IMR-90 (cell line): ENCODE measurements at regions of chr2 and their contacts with region 1.

Region 1: DNA sequence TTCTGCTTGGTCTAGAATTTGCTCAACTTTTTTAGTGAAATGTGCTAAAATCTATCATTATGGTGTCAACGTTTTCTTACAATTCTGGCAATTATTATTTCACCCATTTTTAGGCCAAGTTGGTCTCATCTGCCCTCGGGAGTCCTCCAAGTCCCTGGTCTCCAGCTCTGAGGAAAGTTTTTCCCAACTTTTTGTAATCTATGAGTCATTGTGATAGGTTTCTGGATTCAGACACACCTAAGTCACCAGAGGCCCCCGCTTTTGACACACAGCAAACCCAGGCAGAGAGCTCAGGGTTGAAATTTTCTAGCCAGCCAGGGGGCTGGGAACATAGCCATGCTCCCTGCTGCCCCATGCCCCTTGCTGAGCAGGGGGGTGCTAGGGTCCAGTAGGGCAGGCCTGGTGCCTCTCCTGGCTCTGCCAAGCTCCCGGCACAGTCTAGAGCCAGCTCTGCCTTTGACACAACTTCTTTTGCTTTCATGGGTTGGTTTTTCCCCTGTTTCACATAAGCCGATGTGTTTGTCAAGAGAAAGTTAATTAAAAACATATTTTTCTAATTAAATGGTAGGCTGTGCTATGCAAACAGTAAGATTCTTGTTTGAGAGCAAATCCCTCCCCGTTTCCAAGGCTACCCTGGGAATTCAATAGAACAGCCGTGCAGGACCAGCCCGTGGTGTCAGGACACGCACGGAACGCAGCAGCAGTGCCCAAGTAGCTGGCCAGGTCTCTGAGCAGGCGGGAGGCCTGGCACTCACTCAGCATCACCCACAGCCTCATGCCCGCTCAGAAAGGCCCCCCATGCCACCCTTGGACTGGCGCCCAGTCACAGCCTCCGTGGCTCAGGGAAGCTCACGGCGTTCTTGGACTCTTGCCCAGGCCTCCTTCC is 25.5 kb upstream of the SNED1 start:
- DNase-seq: no peak
- ATAC-seq: no peak
- H3K4me3 ChIP-seq: no peak overlapping the region
- H3K27ac ChIP-seq: no peak overlapping the region
- H3K4me1 ChIP-seq: peaks cover 2% of the 10 kb centered on the region; the same call in 1 of the 2 replicates
- H3K27me3 ChIP-seq: peaks cover 21% of the 10 kb centered on the region
- CTCF ChIP-seq: no peak
- POLR2A ChIP-seq: no peak
- RAD21 ChIP-seq: no peak

Region 2: GRCh38 chr2:241025639-241026038 is 52.8 kb after region 1 on chr2:
- CTCF ChIA-PET with region 1: no interaction called
- POLR2A ChIA-PET with region 1: no interaction called
- dilution Hi-C with region 1: no loop called
- in situ Hi-C with region 1: no loop called
- intact Hi-C with region 1: loop called (anchors 2 kb)
- DNase-seq: no peak
- ATAC-seq: no peak
- H3K4me3 ChIP-seq: no peak overlapping the region
- H3K27ac ChIP-seq: no peak overlapping the region
- H3K4me1 ChIP-seq: no peaks in the 10 kb centered on the region
- H3K27me3 ChIP-seq: no peaks in the 10 kb centered on the region
- CTCF ChIP-seq: no peak
- POLR2A ChIP-seq: no peak
- RAD21 ChIP-seq: no peak